ENCODE measurements at regions of chr7 and their contacts with region 1.

Region 1: DNA sequence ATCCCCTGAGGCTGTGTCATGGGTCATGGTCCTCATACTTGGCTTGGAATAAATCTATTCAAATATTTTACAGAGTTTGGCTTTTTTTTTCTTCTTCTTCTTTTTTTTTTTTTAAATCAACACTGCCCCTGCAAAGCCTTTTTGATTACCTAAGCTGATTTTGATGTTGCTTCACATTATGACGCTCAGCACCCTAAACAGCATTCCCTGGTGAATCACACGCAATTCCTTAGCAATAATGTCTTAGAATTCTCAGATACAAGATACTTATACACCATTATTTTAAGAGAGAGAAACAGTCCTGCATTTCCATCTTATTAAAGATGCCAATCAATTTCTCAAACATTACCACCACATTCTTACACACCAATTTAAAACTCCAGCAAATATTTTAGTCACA is 323.7 kb upstream of the IGFBP3 start:
- DNase-seq: no peak
- H3K4me3 ChIP-seq: no peak overlapping the region
- H3K27ac ChIP-seq: no peak overlapping the region
- H3K4me1 ChIP-seq: no peaks in the 10 kb centered on the region
- H3K27me3 ChIP-seq: no peaks in the 10 kb centered on the region
- CTCF ChIP-seq: no peak
- EP300 ChIP-seq: no peak
- POLR2A ChIP-seq: no peak

Region 2: DNA sequence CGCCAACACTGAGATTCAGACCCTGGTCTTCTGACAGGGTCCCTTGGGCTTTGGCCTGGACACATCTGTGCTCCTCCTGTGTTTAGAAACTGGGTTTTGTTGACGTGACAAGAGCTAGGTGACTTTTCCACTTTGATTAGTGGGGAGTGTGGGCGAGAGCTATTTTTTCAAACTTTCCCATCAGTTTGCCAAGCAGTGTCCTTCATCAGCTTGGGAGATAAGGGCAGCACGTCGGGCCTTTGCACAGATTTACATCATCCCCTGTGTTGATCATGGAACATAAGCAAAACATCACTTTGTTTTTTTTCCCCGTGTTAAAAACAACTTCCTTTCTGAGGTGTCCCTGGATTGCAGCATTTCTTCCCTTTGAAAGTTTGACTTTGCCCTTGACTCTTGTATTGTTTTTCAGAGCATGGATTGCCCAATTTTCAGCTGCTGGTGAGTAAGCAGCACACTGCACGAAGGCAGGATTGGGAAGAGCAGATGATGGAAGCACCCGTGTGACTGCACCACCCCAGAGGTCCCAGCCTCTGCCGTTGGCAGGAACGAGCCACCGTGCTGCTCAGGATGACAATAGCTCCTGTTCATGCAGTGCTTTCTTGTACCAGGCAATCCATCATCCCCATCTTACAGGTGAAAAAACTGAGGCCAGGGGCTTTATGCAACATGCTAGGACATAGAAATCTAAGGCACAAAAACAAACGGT is 362.8 kb before region 1 on chr7:
- in situ Hi-C with region 1: no loop called
- intact Hi-C with region 1: no loop called
- DNase-seq: no peak
- H3K4me3 ChIP-seq: no peak overlapping the region
- H3K27ac ChIP-seq: no peak overlapping the region
- H3K4me1 ChIP-seq: no peaks in the 10 kb centered on the region
- H3K27me3 ChIP-seq: peaks cover 7% of the 10 kb centered on the region
- CTCF ChIP-seq: no peak
- EP300 ChIP-seq: no peak
- POLR2A ChIP-seq: no peak

Region 3: DNA sequence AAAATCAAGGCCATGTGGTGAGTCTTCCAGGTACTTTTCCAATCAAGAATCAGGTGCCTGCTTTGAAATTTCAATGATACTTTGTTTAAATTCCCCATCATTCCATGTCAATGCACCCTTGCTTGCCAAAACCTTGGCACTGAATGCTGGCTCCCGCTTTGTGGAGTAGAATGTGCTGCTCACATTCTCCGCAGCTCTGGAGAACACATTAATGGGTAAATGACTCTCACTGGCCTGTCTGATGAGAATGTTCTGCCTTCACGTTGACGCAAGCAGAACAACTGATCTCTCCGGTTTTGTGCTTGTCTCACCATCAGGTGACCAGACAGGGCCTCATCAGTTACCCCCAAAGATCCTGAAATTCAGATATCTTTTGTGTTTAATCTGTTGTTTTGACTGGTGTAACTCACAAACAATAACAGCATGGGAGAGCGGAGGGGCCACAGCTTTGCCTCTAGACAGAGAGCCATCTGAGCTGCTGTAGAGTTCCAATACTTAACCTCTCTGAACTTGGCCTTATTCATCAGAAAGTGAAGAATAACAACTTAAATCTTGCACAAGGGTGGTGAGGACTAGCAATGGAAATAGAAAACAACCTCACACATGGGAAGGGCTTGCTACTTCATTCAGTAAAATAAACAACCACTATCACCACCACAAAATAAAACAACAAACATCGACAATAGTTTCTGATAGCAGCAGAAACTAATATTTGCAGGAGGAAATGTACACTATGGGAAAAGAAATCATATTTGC is 46.8 kb before region 1 on chr7:
- in situ Hi-C with region 1: no loop called
- intact Hi-C with region 1: loop called (anchors 1 kb)
- DNase-seq: no peak
- H3K4me3 ChIP-seq: no peak overlapping the region
- H3K27ac ChIP-seq: no peak overlapping the region
- H3K4me1 ChIP-seq: no peaks in the 10 kb centered on the region
- H3K27me3 ChIP-seq: no peaks in the 10 kb centered on the region
- CTCF ChIP-seq: no peak
- EP300 ChIP-seq: no peak
- POLR2A ChIP-seq: no peak

Region 4: GRCh38 chr7:46385662-46386309 is 141.0 kb after region 1 on chr7:
- in situ Hi-C with region 1: no loop called
- intact Hi-C with region 1: no loop called
- DNase-seq: no peak
- H3K4me3 ChIP-seq: no peak overlapping the region
- H3K27ac ChIP-seq: no peak overlapping the region
- H3K4me1 ChIP-seq: peaks cover 0 to under 1% (median 0%) of the 10 kb centered on the region in 4 donors
- H3K27me3 ChIP-seq: no peaks in the 10 kb centered on the region
- CTCF ChIP-seq: no peak
- EP300 ChIP-seq: no peak
- POLR2A ChIP-seq: no peak

Measured in transverse colon (tissue), 4 donors.